ENCODE measurements at regions of chr12 and their contacts with region 1.

Region 1: GRCh38 chr12:2267703-2268501 is 215.1 kb downstream of the CACNA1C start:
- ATAC-seq: peak in 1 of 8 experiments; percentile 5
- H3K4me3 ChIP-seq: no peak overlapping the region
- H3K27ac ChIP-seq: no peak overlapping the region
- H3K4me1 ChIP-seq: peaks cover 0 to 31% of the 10 kb centered on the region in 2 donors

Region 2: GRCh38 chr12:2084553-2085296 is 183.2 kb before region 1 on chr12:
- in situ Hi-C with region 1: loop called in 1 of 9 experiments (anchors 25 kb)
- ATAC-seq: peak in 4 of 8 experiments; percentile 14 to 98 (median 84)
- H3K4me3 ChIP-seq: no peak overlapping the region
- H3K27ac ChIP-seq: no peak overlapping the region
- H3K4me1 ChIP-seq: peaks cover 0 to 3% of the 10 kb centered on the region in 2 donors

Region 3: DNA sequence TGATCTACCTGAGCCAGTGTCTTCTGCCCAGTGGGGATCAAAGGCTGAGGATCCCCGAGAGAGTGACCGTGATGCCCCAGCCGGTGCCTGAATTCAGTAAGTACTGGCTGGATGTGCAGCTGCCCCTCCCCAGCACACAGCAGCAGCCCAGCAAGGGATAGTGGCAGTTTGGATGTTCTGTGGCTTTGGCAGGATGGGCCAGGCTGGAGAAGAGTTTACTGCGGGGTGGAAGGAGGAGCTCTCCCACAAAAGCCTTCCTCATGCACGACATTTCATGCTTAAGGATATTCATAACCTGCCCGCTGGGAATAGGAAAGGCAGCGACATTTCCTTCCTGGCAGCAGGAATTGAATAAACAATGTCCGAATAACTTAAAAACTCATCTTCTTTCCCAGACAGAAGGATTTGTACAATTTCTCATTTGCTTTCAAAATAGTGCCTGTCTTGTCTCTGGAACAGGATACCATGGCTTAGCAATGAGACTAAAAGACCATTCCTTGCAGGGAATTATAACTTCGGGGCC is 1087.5 kb after region 1 on chr12:
- in situ Hi-C with region 1: no loop called
- ATAC-seq: peak in 2 of 8 experiments; percentile 22 to 63
- H3K4me3 ChIP-seq: no peak overlapping the region
- H3K27ac ChIP-seq: no peak overlapping the region
- H3K4me1 ChIP-seq: no peaks in the 10 kb centered on the region